Lower leg skin (tissue), 4 donors: ENCODE measurements at regions of chr1 and their contacts with region 1.

Region 1: GRCh38 chr1:212621951-212622305 is 13.4 kb downstream of the ATF3 start:
- DNase-seq: peak in 1 of 2 donors; percentile 18
- H3K4me3 ChIP-seq: no peak overlapping the region
- CTCF ChIP-seq: no peak
- POLR2A ChIP-seq: no peak

Region 2: GRCh38 chr1:212477014-212477679 is 144.8 kb before region 1 on chr1:
- intact Hi-C with region 1: loop called (anchors 10 kb)
- DNase-seq: peak; percentile 87 to 97
- H3K4me3 ChIP-seq: no peak overlapping the region
- CTCF ChIP-seq: peak in 2 of 3 donors; percentile 25 to 72
- POLR2A ChIP-seq: no peak